HepG2 (cell line): ENCODE measurements at regions of chr6 and their contacts with region 1.

Region 1: GRCh38 chr6:37365762-37366161 is 12.0 kb downstream of the RNF8 start:
- DNase-seq: peak; percentile 42
- ATAC-seq: no peak
- H3K4me3 ChIP-seq: no peak overlapping the region
- H3K27ac ChIP-seq: no peak overlapping the region
- H3K4me1 ChIP-seq: peaks cover 45% of the 10 kb centered on the region
- H3K27me3 ChIP-seq: no peaks in the 10 kb centered on the region
- CTCF ChIP-seq: peak; percentile 55
- EP300 ChIP-seq: no peak
- POLR2A ChIP-seq: no peak
- RAD21 ChIP-seq: no peak

Region 2: GRCh38 chr6:37324131-37325033 is 41.4 kb before region 1 on chr6:
- CTCF ChIA-PET with region 1: no interaction called
- POLR2A ChIA-PET with region 1: interaction called, 6 read pairs
- in situ Hi-C with region 1: no loop called
- intact Hi-C with region 1: loop called (anchors 1 kb)
- DNase-seq: no peak
- ATAC-seq: no peak
- H3K4me3 ChIP-seq: no peak overlapping the region
- H3K27ac ChIP-seq: peak overlapping the region; percentile 94
- H3K4me1 ChIP-seq: peaks cover 47% of the 10 kb centered on the region
- H3K27me3 ChIP-seq: no peaks in the 10 kb centered on the region
- CTCF ChIP-seq: no peak
- EP300 ChIP-seq: no peak
- POLR2A ChIP-seq: no peak
- RAD21 ChIP-seq: no peak

Region 3: DNA sequence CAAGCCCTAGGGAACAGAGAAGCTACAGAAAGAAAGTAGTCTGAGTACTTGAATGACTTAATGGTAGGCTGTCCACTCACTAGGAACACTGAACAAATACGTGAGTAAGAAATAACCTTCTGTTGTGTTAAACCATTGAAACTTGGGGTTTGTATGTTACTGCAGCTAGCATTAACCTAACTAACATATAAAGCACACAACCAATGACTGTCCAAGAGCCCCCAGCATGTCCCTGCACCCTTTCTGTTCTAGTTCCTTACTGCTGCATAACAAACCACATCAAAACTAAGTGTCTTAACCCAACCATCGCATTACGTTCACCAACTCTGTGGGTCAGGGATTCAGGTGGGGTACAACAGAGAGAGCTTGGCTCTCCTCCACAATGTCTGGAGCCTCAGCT is 22.5 kb before region 1 on chr6:
- CTCF ChIA-PET with region 1: no interaction called
- POLR2A ChIA-PET with region 1: no interaction called
- in situ Hi-C with region 1: no loop called
- intact Hi-C with region 1: no loop called
- DNase-seq: no peak
- ATAC-seq: no peak
- H3K4me3 ChIP-seq: no peak overlapping the region
- H3K27ac ChIP-seq: no peak overlapping the region
- H3K4me1 ChIP-seq: peaks cover 18% of the 10 kb centered on the region
- H3K27me3 ChIP-seq: no peaks in the 10 kb centered on the region
- CTCF ChIP-seq: no peak
- EP300 ChIP-seq: no peak
- POLR2A ChIP-seq: no peak
- RAD21 ChIP-seq: no peak

Region 4: GRCh38 chr6:37353761-37354525 is 11.8 kb before region 1 on chr6 and contains the start of gene RNF8:
- CTCF ChIA-PET with region 1: no interaction called
- POLR2A ChIA-PET with region 1: interaction called, 13 read pairs
- in situ Hi-C with region 1: no loop called
- intact Hi-C with region 1: loop called (anchors 2 kb)
- DNase-seq: peak; percentile 83
- ATAC-seq: peak; percentile 97
- H3K4me3 ChIP-seq: peak within 1 kb of the TSS; percentile 91 to 98 (median 96)
- H3K27ac ChIP-seq: peak within 1 kb of the TSS; percentile 41
- H3K4me1 ChIP-seq: peaks cover 42% of the 10 kb centered on the region
- H3K27me3 ChIP-seq: no peaks in the 10 kb centered on the region
- CTCF ChIP-seq: no peak
- EP300 ChIP-seq: 0 out of 4 replicates have a peak, but pooled peaks of 1 of the 2 experiments have one; percentile 32
- POLR2A ChIP-seq: peak; percentile 71 to 83; a peak in 3 of 4 replicates
- RAD21 ChIP-seq: no peak
- total RNA-seq, gene RNF8: 47.6 and 65.7 TPM in 2 replicates

Region 5: GRCh38 chr6:37381579-37381978 is 15.8 kb after region 1 on chr6:
- CTCF ChIA-PET with region 1: interaction called, 18 read pairs
- POLR2A ChIA-PET with region 1: no interaction called
- in situ Hi-C with region 1: no loop called
- intact Hi-C with region 1: no loop called
- DNase-seq: peak; percentile 86
- ATAC-seq: peak; percentile 96
- H3K4me3 ChIP-seq: no peak overlapping the region
- H3K27ac ChIP-seq: no peak overlapping the region
- H3K4me1 ChIP-seq: no peaks in the 10 kb centered on the region
- H3K27me3 ChIP-seq: no peaks in the 10 kb centered on the region
- CTCF ChIP-seq: peak; percentile 79
- EP300 ChIP-seq: no peak
- POLR2A ChIP-seq: no peak
- RAD21 ChIP-seq: peak; percentile 77

Region 6: DNA sequence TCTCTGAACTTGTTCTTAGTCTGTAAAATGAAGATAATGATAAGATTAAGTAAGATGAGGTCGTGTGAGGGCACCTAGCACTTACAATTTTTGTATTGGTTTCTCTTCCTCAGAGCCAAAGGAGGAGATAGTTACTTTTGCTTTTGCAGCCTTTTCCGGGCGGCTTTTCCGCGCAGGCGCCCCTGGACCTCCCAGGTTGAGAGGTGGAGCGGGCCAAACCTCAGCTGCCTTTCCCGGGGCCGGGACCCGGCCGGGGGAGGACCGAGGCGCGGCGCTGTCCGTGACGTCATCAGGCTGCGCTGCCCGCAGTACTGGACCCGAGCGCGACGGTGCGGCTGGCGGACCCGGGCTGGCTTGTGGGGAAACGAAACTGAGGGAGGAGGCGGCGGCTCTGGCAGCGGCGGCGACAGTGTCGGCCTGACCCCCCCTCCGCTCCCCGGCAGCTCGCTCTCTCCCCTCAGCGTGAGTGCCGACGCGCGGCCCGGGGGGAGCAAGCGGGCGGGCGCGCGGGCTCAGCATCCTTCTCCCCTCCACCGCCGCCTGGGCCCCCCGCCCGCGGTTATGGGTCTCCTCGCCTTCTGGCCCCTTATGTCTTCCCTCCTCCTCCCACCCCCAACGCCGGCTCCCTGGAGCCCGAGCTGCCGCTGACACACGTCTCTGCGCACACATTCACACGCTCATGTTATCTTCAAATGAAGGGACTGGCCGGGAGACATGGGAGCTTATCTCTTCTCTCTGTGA is 67.3 kb after region 1 on chr6 and contains the start of gene CMTR1:
- CTCF ChIA-PET with region 1: no interaction called
- POLR2A ChIA-PET with region 1: interaction called, 4 read pairs
- in situ Hi-C with region 1: no loop called
- intact Hi-C with region 1: loop called (anchors 2 kb)
- DNase-seq: peak; percentile 85
- ATAC-seq: peak; percentile 98
- H3K4me3 ChIP-seq: peak within 1 kb of the TSS; percentile 87 to 98 (median 90)
- H3K27ac ChIP-seq: peak within 1 kb of the TSS; percentile 67
- H3K4me1 ChIP-seq: peaks cover 23% of the 10 kb centered on the region
- H3K27me3 ChIP-seq: no peaks in the 10 kb centered on the region; a peak in 1 of 5 replicates
- CTCF ChIP-seq: peak; percentile 47
- EP300 ChIP-seq: peak; percentile 4 to 56; a peak in 1 of 4 replicates
- POLR2A ChIP-seq: peak; percentile 90
- RAD21 ChIP-seq: peak; percentile 47
- total RNA-seq, gene CMTR1: 33.0 and 55.2 TPM in 2 replicates

Region 7: DNA sequence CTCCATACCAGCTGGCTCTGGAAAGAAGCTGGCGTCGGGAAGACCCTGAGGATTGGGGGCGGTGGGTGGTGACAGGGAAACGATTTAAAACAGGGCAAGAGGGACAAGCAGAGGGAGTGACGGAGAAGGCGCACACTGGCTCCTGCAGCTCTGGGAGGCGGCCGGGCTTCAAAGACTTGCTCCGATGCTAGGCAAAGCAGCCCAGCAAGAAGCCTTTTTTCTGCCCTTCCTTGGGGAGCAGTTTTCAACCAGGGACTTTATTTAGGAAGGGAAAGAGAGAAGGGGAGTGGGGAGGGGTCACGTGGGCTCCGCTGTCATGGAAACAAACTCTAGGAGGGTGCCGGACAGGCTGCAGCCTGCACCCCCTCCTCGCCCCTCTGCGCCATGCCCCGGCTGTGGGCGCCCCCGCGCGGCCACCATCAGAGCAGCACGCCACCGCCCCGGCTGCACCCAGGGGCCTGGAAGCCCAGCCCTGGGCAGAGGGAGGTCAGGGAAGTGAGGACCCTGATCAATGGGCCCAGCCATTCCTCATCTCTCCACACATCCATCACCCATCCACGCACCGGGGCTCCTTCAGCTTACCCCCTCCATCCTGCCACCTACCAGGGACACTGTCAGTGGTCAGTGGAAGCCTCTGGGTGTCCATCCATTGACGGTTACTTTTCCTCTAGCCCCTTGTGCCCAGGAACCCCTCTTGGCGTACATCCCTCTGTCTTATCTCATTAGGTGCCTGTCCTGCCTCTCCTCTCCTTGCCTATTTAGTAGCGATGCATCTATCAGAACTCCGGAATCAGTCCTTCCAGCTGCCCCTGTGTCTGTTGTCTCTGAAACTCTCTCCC is 200.6 kb after region 1 on chr6:
- CTCF ChIA-PET with region 1: no interaction called
- POLR2A ChIA-PET with region 1: no interaction called
- in situ Hi-C with region 1: no loop called
- intact Hi-C with region 1: loop called (anchors 10 kb)
- DNase-seq: no peak
- ATAC-seq: peak; percentile 92
- H3K4me3 ChIP-seq: no peak overlapping the region
- H3K27ac ChIP-seq: no peak overlapping the region
- H3K4me1 ChIP-seq: no peaks in the 10 kb centered on the region
- H3K27me3 ChIP-seq: peaks cover 16 to 77% of the 10 kb centered on the region in 2 experiments
- CTCF ChIP-seq: peak; percentile 93
- EP300 ChIP-seq: no peak
- POLR2A ChIP-seq: no peak
- RAD21 ChIP-seq: peak; percentile 90